OCI-LY7 (cell line): ENCODE measurements at regions of chr1 and their contacts with region 1.

Region 1: DNA sequence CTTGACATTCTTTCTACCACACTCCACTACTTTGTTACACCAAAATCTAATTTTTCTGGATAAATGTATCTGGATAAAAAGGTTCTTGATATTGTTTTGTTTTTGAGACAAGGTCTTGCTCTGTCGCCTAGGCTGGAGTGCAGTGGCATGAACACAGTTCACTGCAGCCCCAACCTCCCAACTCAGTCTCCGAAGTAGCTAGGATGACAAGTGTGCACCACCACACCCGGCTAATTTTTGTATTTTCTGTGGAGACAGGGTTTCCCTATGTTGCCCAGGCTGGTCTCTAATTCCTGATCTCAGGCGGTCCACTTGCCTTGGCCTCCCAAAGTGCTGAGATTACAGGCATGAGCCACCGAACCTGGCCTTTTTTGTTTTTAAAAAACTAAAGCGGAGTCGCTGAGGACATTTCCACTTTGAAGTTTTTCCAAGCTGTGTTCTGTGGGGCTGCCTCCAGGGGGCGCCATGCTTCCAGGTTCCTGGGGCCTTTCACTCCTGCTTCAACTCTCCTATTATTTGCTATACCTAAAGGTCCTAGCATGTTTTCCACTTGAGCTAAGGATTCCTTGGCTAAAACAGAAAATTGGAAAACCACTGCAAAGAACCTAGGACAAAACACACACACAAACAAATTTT is 14.1 kb upstream of the NCMAP start:
- DNase-seq: no peak
- H3K4me3 ChIP-seq: no peak overlapping the region
- H3K27ac ChIP-seq: no peak overlapping the region
- H3K4me1 ChIP-seq: peaks cover 69% of the 10 kb centered on the region
- CTCF ChIP-seq: peak; percentile 96

Region 2: GRCh38 chr1:24391882-24392603 is 149.8 kb before region 1 on chr1:
- CTCF ChIA-PET with region 1: no interaction called
- POLR2A ChIA-PET with region 1: no interaction called
- intact Hi-C with region 1: no loop called
- DNase-seq: peak; percentile 89
- H3K4me3 ChIP-seq: peak overlapping the region; percentile 58
- H3K27ac ChIP-seq: peak overlapping the region; percentile 88
- H3K4me1 ChIP-seq: peaks cover 44% of the 10 kb centered on the region
- CTCF ChIP-seq: peak; percentile 92

Region 3: GRCh38 chr1:24586970-24587820 is 45.4 kb after region 1 on chr1:
- CTCF ChIA-PET with region 1: interaction called, 4 read pairs
- POLR2A ChIA-PET with region 1: interaction called, 6 read pairs
- intact Hi-C with region 1: loop called (anchors 2 kb)
- DNase-seq: peak; percentile 88
- H3K4me3 ChIP-seq: no peak overlapping the region
- H3K27ac ChIP-seq: no peak overlapping the region
- H3K4me1 ChIP-seq: peaks cover 11% of the 10 kb centered on the region
- CTCF ChIP-seq: peak; percentile 91